A673 (cell line): ENCODE measurements at regions of chr20 and their contacts with region 1.

Region 1: DNA sequence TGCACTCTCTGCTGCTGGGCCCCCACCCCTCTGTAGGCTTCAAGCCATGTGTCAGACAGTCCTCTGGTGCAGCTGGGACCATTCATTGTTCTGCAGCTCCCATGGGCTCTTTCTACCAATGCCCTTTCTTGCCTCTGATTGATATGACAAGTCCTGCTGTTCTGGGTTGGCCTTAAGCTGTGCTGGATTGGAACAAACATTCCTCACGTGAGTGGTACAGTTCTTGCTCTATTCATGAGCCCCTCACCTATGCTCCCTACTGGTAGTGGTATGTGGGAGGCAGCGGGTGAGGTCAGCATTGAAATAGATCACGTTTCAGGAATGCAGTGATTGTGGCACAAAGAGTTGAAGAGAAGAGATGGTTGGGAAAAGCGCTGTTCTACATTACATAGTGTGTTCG is 48.8 kb upstream of the RALY start:
- DNase-seq: no peak
- H3K4me3 ChIP-seq: no peak overlapping the region
- H3K27ac ChIP-seq: no peak overlapping the region
- H3K4me1 ChIP-seq: no peaks in the 10 kb centered on the region
- H3K27me3 ChIP-seq: no peaks in the 10 kb centered on the region
- CTCF ChIP-seq: no peak

Region 2: GRCh38 chr20:33561692-33562601 is 383.0 kb before region 1 on chr20:
- CTCF ChIA-PET with region 1: interaction called, 10 read pairs
- POLR2A ChIA-PET with region 1: no interaction called
- intact Hi-C with region 1: no loop called
- DNase-seq: peak; percentile 75
- H3K4me3 ChIP-seq: no peak overlapping the region
- H3K27ac ChIP-seq: peak overlapping the region; percentile 6
- H3K4me1 ChIP-seq: peaks cover 13% of the 10 kb centered on the region
- H3K27me3 ChIP-seq: no peaks in the 10 kb centered on the region
- CTCF ChIP-seq: no peak

Region 3: DNA sequence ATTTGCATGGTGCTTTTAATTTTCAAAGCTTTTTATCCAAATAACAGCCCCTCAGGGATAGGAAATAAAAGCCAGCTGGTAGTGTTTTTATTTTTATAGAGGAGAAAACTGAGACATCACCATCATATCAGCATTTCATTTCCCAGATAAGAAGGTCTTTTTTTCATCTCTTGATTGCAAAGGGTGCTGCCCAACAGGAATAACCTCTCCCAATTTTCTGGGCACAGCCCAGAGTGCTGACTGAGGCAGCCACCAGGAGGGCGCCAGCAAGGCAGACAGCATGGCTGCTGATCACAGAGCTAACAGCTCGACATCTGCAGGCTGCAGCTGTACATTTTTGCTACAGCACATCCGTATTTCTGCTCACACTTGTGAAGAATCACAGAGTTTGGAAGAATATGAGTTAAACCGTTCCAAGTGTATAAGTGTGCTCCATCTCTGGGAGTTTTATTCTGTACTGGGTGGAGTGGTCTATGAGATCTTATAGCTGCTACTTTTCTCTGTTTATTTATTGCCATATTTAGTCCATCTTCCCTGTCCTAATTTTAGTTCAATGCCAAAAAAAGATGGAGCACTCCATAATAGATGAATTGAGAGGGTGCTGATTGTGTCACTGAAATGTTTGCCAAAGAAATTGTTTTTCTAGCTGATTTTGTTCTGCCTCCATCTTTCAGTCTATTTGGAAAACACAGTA is 368.3 kb before region 1 on chr20:
- CTCF ChIA-PET with region 1: no interaction called
- POLR2A ChIA-PET with region 1: no interaction called
- intact Hi-C with region 1: no loop called
- DNase-seq: no peak
- H3K4me3 ChIP-seq: no peak overlapping the region
- H3K27ac ChIP-seq: no peak overlapping the region
- H3K4me1 ChIP-seq: peaks cover 23% of the 10 kb centered on the region
- H3K27me3 ChIP-seq: no peaks in the 10 kb centered on the region
- CTCF ChIP-seq: peak; percentile 32; the same call in 1 of the 2 replicates

Region 4: DNA sequence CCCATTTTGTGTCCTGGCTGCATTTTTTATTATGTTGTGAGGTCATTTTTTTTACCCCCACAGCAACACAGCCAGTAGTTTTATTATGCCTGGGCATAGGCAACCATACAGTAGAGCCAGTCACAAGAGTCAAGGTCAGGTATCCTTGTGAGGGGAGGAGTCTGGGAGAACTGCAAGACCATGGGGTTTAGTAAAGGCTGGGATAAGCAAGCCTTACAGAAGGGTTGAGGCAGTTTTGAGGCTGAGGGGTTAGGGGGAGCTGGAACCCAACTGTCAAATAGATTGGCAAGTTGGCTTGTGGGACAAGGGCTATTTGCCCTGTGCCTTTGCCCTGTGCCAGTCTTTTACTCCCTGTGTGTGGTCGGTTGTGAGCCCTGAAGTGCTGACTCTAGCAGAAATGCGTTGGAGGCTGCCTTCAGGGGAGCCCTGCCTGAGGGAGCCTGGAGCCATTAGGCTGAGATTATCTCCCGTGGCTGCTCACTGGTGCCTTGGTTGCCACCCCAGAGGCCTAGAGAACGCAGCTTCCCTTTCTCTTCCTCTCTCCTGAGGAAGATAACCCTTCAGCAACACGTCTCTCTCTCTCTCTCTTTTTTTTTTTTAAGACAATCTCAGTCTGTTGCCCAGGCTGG is 79.9 kb after region 1 on chr20:
- CTCF ChIA-PET with region 1: no interaction called
- POLR2A ChIA-PET with region 1: no interaction called
- intact Hi-C with region 1: no loop called
- DNase-seq: peak; percentile 22
- H3K4me3 ChIP-seq: no peak overlapping the region
- H3K27ac ChIP-seq: peak overlapping the region; percentile 13
- H3K4me1 ChIP-seq: peaks cover 26% of the 10 kb centered on the region
- H3K27me3 ChIP-seq: no peaks in the 10 kb centered on the region
- CTCF ChIP-seq: no peak